ENCODE measurements at regions of chr12 and their contacts with region 1.

Region 1: GRCh38 chr12:95918194-95918993 is 24.0 kb downstream of the CCDC38 start:
- DNase-seq: peak; percentile 72
- H3K4me3 ChIP-seq: no peak overlapping the region
- H3K27ac ChIP-seq: no peak overlapping the region
- H3K4me1 ChIP-seq: no peaks in the 10 kb centered on the region
- H3K27me3 ChIP-seq: no peaks in the 10 kb centered on the region
- CTCF ChIP-seq: peak; percentile 90

Region 2: DNA sequence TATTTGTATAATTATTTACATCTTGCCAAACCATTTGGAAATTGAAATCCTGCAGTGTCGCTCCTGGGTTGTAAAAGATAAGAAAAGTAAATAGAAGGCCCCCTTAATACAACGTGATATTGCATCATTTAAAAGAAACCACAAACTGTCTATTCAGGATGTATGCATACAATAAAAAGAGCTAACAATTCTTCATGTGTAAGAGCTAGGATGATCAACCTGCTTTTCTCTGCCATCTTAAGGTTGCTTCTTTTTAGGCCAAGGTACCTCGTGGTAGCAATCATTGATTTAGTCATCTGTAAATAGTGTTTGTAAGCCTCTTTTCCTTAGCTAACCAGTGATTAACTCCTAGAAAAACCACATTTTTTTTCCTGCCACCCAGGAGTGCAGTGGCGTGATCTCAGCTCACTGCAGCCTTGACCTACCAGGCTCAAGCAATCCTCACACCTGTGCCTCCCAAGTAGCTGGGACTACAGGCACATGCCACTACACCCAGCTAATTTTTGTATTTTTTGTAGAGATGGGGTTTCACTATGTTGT is 363.8 kb before region 1 on chr12:
- CTCF ChIA-PET with region 1: no interaction called
- POLR2A ChIA-PET with region 1: no interaction called
- intact Hi-C with region 1: no loop called
- DNase-seq: no peak
- H3K4me3 ChIP-seq: no peak overlapping the region
- H3K27ac ChIP-seq: no peak overlapping the region
- H3K4me1 ChIP-seq: no peaks in the 10 kb centered on the region
- H3K27me3 ChIP-seq: no peaks in the 10 kb centered on the region
- CTCF ChIP-seq: no peak

Region 3: GRCh38 chr12:95858479-95859343 is 59.7 kb before region 1 on chr12 and contains the start of gene SNRPF:
- CTCF ChIA-PET with region 1: no interaction called
- POLR2A ChIA-PET with region 1: no interaction called
- intact Hi-C with region 1: no loop called
- DNase-seq: peak; percentile 98
- H3K4me3 ChIP-seq: peak within 1 kb of the TSS; percentile 80
- H3K27ac ChIP-seq: peak within 1 kb of the TSS; percentile 87
- H3K4me1 ChIP-seq: peaks cover 7% of the 10 kb centered on the region
- H3K27me3 ChIP-seq: no peaks in the 10 kb centered on the region
- CTCF ChIP-seq: no peak; the same call in 1 of the 2 replicates
- total RNA-seq, gene SNRPF: 57.7 and 71.4 TPM in 2 replicates

Region 4: DNA sequence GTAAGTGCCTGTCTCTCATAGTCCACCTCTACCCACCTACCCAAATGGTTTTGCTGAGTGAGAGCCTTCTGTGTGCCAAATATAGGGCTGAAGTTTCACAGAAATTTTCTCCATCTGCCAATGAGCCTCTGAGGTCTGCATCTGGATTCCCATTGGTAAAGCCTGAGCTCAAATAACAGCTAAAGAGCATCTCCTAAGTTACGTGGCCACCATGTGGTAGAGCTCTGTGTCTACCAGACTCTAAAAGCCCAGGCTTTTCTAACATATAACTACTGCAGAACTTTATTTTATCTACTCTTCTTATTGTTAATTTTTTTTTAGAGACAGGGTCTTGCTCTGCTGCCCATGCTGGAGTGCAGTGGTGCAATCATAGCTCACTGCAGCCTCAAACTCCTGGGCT is 40.7 kb after region 1 on chr12:
- CTCF ChIA-PET with region 1: interaction called, 10 read pairs
- POLR2A ChIA-PET with region 1: no interaction called
- intact Hi-C with region 1: loop called (anchors 5 kb)
- DNase-seq: peak; percentile 62
- H3K4me3 ChIP-seq: no peak overlapping the region
- H3K27ac ChIP-seq: no peak overlapping the region
- H3K4me1 ChIP-seq: no peaks in the 10 kb centered on the region
- H3K27me3 ChIP-seq: no peaks in the 10 kb centered on the region
- CTCF ChIP-seq: peak; percentile 52

Region 5: GRCh38 chr12:95998611-95999286 is 80.4 kb after region 1 on chr12:
- CTCF ChIA-PET with region 1: interaction called, 5 read pairs
- POLR2A ChIA-PET with region 1: no interaction called
- intact Hi-C with region 1: loop called (anchors 1 kb)
- DNase-seq: peak; percentile 74
- H3K4me3 ChIP-seq: no peak overlapping the region
- H3K27ac ChIP-seq: no peak overlapping the region
- H3K4me1 ChIP-seq: no peaks in the 10 kb centered on the region
- H3K27me3 ChIP-seq: no peaks in the 10 kb centered on the region
- CTCF ChIP-seq: peak; percentile 85

Region 6: DNA sequence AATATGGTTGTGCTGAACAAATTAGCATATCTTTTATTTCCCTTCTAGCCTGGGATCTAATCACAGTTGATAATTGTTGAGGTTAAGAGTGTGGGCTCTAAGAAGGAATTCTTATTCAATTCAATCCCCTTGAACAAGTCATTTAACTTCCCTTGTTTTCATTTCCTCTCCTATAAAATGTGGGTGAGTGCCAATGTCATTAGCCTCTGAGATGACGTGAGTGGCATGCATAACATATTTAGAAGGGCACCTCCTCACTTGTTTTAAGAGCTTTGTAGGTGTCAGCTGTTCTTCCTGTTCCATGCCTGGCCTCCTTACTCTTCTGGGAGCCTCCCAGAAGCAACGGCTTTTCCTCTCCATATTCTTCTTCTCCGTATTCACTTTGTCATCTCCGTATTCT is 833.2 kb after region 1 on chr12:
- CTCF ChIA-PET with region 1: no interaction called
- POLR2A ChIA-PET with region 1: no interaction called
- intact Hi-C with region 1: no loop called
- DNase-seq: peak; percentile 62
- H3K4me3 ChIP-seq: no peak overlapping the region
- H3K27ac ChIP-seq: no peak overlapping the region
- H3K4me1 ChIP-seq: no peaks in the 10 kb centered on the region
- H3K27me3 ChIP-seq: peaks cover 5% of the 10 kb centered on the region
- CTCF ChIP-seq: no peak

Measured in A673 (cell line).